ENCODE measurements at regions of chr7 and their contacts with region 1.

Region 1: GRCh38 chr7:100705753-100706671 is at the start of gene POP7:
- DNase-seq: peak; percentile 99
- H3K4me3 Mint-ChIP-seq: peak within 1 kb of the TSS; percentile 98
- H3K27ac Mint-ChIP-seq: peak within 1 kb of the TSS; percentile 98
- H3K4me1 Mint-ChIP-seq: peaks cover 7% of the 10 kb centered on the region
- H3K27me3 Mint-ChIP-seq: peaks cover 13% of the 10 kb centered on the region
- total RNA-seq, gene POP7: 82.7 and 84.4 TPM in 2 replicates

Region 2: DNA sequence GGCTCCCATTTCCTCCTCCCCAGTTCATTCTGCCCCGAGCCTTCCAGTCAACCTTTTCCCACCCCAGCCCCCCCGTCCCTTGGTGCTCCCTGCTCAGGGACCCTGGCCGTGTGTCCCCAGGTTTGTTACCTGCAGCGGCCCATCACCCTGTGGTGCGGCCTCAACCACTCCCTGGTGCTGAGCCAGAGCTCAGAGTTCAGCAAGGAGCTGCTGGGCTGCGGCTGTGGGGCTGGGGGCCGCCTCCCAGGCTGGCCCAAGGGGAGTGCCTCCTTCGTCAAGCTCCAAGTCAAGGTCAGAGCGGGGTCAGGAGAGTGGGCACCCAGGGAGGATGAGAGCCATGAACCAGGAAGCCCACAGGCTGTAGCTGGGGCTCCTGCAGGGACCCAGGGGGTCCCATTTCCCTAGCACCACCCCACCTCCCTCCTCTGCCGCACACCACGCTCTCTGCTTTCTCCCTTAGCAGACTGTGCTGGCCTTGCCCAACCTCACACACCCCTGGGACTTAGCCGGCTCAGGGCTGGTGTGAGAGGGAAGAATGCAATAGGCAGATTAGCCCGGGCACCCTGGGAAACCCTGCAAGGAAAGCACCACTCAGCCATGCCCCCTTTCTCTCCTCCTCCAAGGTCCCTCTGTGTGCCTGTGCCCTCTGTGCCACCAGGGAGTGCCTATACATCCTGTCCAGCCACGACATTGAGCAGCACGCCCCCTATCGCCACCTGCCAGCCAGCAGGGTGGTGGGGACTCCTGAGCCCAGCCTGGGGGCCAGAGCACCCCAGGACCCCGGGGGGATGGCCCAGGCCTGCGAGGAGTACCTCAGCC is 105.9 kb before region 1 on chr7:
- intact Hi-C with region 1: no loop called
- DNase-seq: no peak
- H3K4me3 Mint-ChIP-seq: no peak overlapping the region
- H3K27ac Mint-ChIP-seq: no peak overlapping the region
- H3K4me1 Mint-ChIP-seq: peaks cover 15% of the 10 kb centered on the region
- H3K27me3 Mint-ChIP-seq: peaks cover 2% of the 10 kb centered on the region

Region 3: DNA sequence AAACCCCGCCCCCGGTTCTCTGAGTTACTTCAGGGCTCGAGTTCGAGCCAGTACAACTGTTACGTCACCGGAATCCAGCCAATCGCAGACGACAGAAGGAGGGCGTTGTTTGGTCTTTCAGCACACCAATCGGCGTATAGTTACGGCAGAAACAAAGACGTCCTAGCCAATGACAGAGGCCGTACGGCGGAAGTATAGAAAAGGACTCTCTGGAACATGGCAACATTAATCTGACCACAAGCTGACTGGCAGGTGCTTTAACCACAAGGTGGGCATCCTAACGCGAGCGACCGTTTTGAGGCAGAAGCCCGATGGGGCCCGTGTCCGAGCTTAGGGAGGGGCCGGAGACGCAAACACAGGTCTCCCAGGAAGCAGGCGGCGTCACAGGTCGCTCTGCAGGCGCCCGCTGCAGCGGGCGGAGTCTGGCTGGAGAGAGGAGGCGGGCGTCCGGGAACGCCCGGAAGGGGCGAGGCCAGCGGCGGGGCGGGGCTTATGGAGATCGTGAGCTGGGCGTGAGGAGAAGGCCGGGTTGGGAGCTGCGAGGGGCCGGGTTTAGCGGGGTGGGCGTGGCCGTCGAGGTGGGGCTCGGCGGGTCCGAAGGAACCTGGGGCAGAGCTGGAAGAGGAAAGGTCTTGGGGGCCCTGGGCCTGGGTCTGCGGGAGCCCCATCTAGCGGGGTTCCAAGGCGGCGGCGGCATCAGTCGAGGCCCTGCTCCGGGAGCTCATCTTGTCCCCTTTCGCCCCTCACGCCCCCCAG is 93.9 kb before region 1 on chr7 and contains the start of gene MOSPD3:
- intact Hi-C with region 1: loop called (anchors 1 kb)
- DNase-seq: peak; percentile 97
- H3K4me3 Mint-ChIP-seq: peak within 1 kb of the TSS; percentile 98
- H3K27ac Mint-ChIP-seq: peak within 1 kb of the TSS; percentile 100
- H3K4me1 Mint-ChIP-seq: peaks cover 22% of the 10 kb centered on the region
- H3K27me3 Mint-ChIP-seq: peaks cover 8% of the 10 kb centered on the region
- total RNA-seq, gene MOSPD3: 10.3 and 11.5 TPM in 2 replicates

Region 4: GRCh38 chr7:100680167-100680575 is 25.8 kb before region 1 on chr7:
- intact Hi-C with region 1: no loop called
- DNase-seq: no peak
- H3K4me3 Mint-ChIP-seq: no peak overlapping the region
- H3K27ac Mint-ChIP-seq: peak overlapping the region; percentile 26
- H3K4me1 Mint-ChIP-seq: peaks cover 15% of the 10 kb centered on the region
- H3K27me3 Mint-ChIP-seq: no peaks in the 10 kb centered on the region

Region 5: GRCh38 chr7:100691676-100692577 is 14.1 kb before region 1 on chr7:
- intact Hi-C with region 1: loop called (anchors 1 kb)
- DNase-seq: peak; percentile 74
- H3K4me3 Mint-ChIP-seq: peak overlapping the region; percentile 94
- H3K27ac Mint-ChIP-seq: peak overlapping the region; percentile 45
- H3K4me1 Mint-ChIP-seq: peaks cover 27% of the 10 kb centered on the region
- H3K27me3 Mint-ChIP-seq: peaks cover 16% of the 10 kb centered on the region

Region 6: GRCh38 chr7:100793806-100794660 is 88.0 kb after region 1 on chr7:
- intact Hi-C with region 1: no loop called
- DNase-seq: no peak
- H3K4me3 Mint-ChIP-seq: no peak overlapping the region
- H3K27ac Mint-ChIP-seq: no peak overlapping the region
- H3K4me1 Mint-ChIP-seq: no peaks in the 10 kb centered on the region
- H3K27me3 Mint-ChIP-seq: peaks cover 2% of the 10 kb centered on the region

Region 7: GRCh38 chr7:100889761-100890634 is 184.0 kb after region 1 on chr7:
- intact Hi-C with region 1: loop called (anchors 1 kb)
- DNase-seq: peak; percentile 91
- H3K4me3 Mint-ChIP-seq: peak overlapping the region; percentile 82
- H3K27ac Mint-ChIP-seq: peak overlapping the region; percentile 67
- H3K4me1 Mint-ChIP-seq: peaks cover 42% of the 10 kb centered on the region
- H3K27me3 Mint-ChIP-seq: peaks cover 23% of the 10 kb centered on the region

Region 8: DNA sequence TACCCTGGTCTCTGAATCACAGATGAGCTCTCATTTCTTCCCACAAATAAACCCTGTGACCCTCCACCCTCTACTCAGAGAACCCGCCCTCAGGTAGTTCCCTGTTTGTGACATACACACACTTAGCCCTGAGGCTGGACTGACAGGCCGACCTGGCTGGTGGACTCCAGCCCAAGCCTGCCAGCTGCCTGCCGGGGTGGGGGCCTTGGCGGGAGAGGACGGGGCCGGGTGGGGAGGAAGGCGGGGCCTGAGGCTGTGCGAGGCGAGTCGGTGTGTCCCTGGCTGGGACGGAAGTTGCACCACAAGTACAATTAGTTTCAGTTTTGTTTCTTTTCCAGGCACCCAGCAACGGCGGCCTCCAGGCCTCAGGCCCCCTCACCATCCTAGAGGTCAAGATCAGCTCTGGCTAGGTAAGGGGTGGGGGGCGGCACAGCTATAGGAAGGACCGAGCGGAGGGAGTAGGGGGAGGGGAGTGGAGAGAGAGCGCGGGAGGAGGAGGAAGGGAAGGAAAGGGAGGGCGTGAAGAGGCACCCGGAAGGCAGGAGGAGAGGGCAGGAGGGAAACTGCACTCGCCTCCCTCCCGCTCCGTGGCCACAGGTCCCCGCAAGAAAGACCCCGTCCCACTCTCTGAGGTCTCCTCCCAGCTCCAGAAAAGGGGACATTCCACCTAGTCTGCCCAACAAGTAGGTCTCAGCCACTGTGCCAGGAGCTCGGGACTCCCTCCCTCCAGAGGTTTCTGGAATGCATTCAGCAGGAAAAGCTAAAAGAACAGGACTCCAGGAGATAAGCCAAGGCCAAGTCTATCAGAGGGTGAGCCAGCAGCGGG is 379.4 kb after region 1 on chr7 and contains the start of gene TRIM56:
- intact Hi-C with region 1: loop called (anchors 10 kb)
- DNase-seq: peak; percentile 76
- H3K4me3 Mint-ChIP-seq: peak within 1 kb of the TSS; percentile 98
- H3K27ac Mint-ChIP-seq: peak within 1 kb of the TSS; percentile 98
- H3K4me1 Mint-ChIP-seq: peaks cover 31% of the 10 kb centered on the region
- H3K27me3 Mint-ChIP-seq: no peaks in the 10 kb centered on the region
- total RNA-seq, gene TRIM56: 41.2 and 45.7 TPM in 2 replicates

Measured in activated T-helper 1 cell treated with anti-CD3 and anti-CD28 coated beads, Interleukin-12 subunit alpha, Interleukin-12 subunit beta, Interleukin-2, Interleukin-4 antibody, amounts not matched to agents 30 ng/mL and 10 ng/mL and 1 ng/mL, durations not matched to agents 14 hours and 24 hours and 36 hours (primary cell).